ENCODE measurements at regions of chr19 and their contacts with region 1.

Region 1: GRCh38 chr19:46542428-46543230 is 47.0 kb upstream of the PNMA8B start:
- DNase-seq: peak; percentile 50 to 84 (median 71)
- H3K4me3 ChIP-seq: no peak overlapping the region
- H3K4me3 Mint-ChIP-seq: no peak overlapping the region
- H3K27ac ChIP-seq: no peak overlapping the region
- H3K27ac Mint-ChIP-seq: no peak overlapping the region
- H3K4me1 ChIP-seq: peaks cover 3% of the 10 kb centered on the region
- H3K4me1 Mint-ChIP-seq: peaks cover 3 to 5% (median 4%) of the 10 kb centered on the region in 3 donors
- H3K27me3 ChIP-seq: no peaks in the 10 kb centered on the region
- H3K27me3 Mint-ChIP-seq: peaks cover 4 to 7% of the 10 kb centered on the region in 2 donors

Region 2: DNA sequence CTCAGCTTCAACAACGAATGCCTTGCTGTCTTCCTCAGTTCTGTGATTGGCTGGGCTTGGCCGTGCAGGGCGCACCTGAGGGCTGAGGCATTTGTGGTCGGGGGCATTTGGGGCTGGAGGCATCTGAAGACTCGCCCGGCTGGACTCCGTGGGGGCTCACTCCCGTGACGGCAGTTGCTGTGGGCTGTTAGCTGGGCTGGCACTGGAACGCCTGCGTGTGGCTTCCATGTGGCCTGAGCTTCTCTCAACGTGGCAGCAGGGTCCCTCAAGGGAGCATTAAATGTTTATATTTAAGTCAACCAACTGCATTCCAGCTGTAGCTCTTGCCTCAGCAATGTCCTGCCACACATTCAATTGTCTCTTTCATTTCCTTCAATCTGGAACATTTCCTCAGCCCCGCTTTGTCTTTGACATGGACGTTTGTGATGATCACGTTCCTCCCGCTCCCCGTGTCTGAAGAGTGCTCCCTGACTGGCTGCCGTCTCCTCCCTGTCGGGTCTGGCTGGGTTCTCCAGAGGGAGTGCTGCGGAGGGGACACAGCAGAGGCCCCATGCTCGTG is 150.3 kb before region 1 on chr19:
- CTCF ChIA-PET with region 1: interaction called, 12 read pairs
- POLR2A ChIA-PET with region 1: no interaction called
- DNase-seq: no peak
- H3K4me3 ChIP-seq: no peak overlapping the region
- H3K4me3 Mint-ChIP-seq: no peak overlapping the region
- H3K27ac ChIP-seq: no peak overlapping the region
- H3K27ac Mint-ChIP-seq: peak overlapping the region in 1 of 8 donors; percentile 59
- H3K4me1 ChIP-seq: no peaks in the 10 kb centered on the region
- H3K4me1 Mint-ChIP-seq: peaks cover 3 to 10% (median 9%) of the 10 kb centered on the region in 3 donors
- H3K27me3 ChIP-seq: no peaks in the 10 kb centered on the region
- H3K27me3 Mint-ChIP-seq: no peaks in the 10 kb centered on the region

Region 3: GRCh38 chr19:46515879-46516350 is 26.7 kb before region 1 on chr19:
- CTCF ChIA-PET with region 1: interaction called, 54 read pairs
- POLR2A ChIA-PET with region 1: no interaction called
- DNase-seq: peak in 2 of 5 donors; percentile 5 to 46
- H3K4me3 ChIP-seq: no peak overlapping the region
- H3K4me3 Mint-ChIP-seq: no peak overlapping the region
- H3K27ac ChIP-seq: no peak overlapping the region
- H3K27ac Mint-ChIP-seq: peak overlapping the region in 1 of 8 donors; percentile 11
- H3K4me1 ChIP-seq: peaks cover 29% of the 10 kb centered on the region
- H3K4me1 Mint-ChIP-seq: peaks cover 12 to 23% (median 23%) of the 10 kb centered on the region in 3 donors
- H3K27me3 ChIP-seq: peaks cover 6% of the 10 kb centered on the region
- H3K27me3 Mint-ChIP-seq: peaks cover 22 to 30% of the 10 kb centered on the region in 2 donors

Region 4: GRCh38 chr19:46529622-46530462 is 12.8 kb before region 1 on chr19:
- CTCF ChIA-PET with region 1: interaction called, 54 read pairs
- POLR2A ChIA-PET with region 1: no interaction called
- DNase-seq: peak; percentile 56 to 79 (median 64)
- H3K4me3 ChIP-seq: no peak overlapping the region
- H3K4me3 Mint-ChIP-seq: no peak overlapping the region
- H3K27ac ChIP-seq: no peak overlapping the region
- H3K27ac Mint-ChIP-seq: peak overlapping the region in 1 of 8 donors; percentile 56
- H3K4me1 ChIP-seq: peaks cover 10% of the 10 kb centered on the region
- H3K4me1 Mint-ChIP-seq: peaks cover 10 to 12% (median 11%) of the 10 kb centered on the region in 3 donors
- H3K27me3 ChIP-seq: no peaks in the 10 kb centered on the region
- H3K27me3 Mint-ChIP-seq: peaks cover 2 to 17% of the 10 kb centered on the region in 2 donors

Region 5: DNA sequence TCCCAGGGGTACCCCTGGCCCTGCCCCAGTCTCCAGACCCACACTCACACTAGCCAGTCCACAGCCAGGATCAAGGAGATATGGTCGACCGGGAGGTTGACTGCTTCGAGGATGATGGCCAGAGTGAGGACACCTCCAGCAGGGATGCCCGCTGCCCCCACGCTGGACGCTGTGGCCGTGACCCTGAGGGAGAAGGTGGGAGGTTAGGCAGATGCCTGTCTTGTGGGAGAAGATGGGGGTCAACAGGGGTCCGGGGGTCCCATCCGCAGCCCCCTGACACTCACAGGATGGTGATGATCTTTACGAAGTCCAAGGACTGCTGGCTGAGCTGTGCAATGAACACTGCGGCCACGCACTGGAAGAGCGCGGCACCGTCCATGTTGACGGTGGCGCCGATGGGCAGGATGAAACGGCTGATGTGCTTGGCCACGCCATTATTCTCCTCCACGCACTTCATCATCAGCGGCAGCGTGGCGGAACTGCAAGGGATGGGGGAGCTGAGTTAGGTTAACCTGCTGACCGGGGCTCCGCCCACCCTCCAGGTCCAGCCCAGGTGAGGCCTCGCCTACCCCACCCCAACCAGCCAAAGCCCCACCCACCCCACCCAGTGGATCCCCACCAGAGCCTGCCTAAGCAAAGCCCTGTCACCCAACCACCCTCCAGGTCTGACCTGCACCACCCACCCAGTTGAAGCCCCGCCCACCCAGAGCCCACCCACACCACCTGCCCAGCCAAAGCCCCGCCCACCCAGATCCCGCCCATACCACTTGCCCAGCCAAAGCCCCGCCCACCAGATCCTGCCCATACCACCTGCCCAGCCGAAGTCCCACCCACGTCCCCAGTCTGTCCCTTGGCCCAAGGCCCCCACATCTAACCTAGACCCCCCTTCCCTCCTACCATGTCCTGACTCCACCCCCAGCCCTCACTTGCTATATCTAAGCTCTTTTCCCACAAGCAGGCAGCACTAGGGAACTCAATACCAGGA is 234.6 kb after region 1 on chr19:
- CTCF ChIA-PET with region 1: no interaction called
- POLR2A ChIA-PET with region 1: no interaction called
- DNase-seq: no peak
- H3K4me3 ChIP-seq: no peak overlapping the region
- H3K4me3 Mint-ChIP-seq: no peak overlapping the region
- H3K27ac ChIP-seq: no peak overlapping the region
- H3K27ac Mint-ChIP-seq: peak overlapping the region in 3 of 8 donors; percentile 3 to 90 (median 77)
- H3K4me1 ChIP-seq: no peaks in the 10 kb centered on the region
- H3K4me1 Mint-ChIP-seq: peaks cover 0 to 6% (median 5%) of the 10 kb centered on the region in 3 donors
- H3K27me3 ChIP-seq: no peaks in the 10 kb centered on the region
- H3K27me3 Mint-ChIP-seq: no peaks in the 10 kb centered on the region